HepG2 (cell line): ENCODE measurements at regions of chr11 and their contacts with region 1.

Region 1: DNA sequence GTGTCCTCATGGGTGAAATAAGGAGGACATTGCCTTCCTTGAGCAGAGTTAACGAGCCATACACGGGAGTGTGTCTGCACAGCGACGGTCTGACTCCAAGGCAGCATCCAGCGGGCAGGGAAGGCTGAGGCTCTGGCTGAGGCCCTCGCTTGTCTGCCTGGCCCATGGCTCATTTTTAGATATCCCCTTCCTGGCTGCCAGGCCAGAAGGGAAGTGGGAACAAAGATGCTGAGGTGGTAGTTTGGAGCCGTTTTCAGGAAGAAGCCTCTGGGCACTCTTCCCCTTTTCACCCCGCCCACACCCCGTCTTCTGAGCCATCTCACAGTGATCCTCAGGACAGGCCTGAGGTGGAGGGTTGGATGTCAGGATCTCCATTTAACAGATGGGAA is 3.0 kb upstream of the SLCO2B1 start:
- DNase-seq: no peak
- ATAC-seq: no peak
- H3K4me3 ChIP-seq: no peak overlapping the region
- H3K27ac ChIP-seq: no peak overlapping the region
- H3K4me1 ChIP-seq: peaks cover 99% of the 10 kb centered on the region
- H3K27me3 ChIP-seq: no peaks in the 10 kb centered on the region
- CTCF ChIP-seq: no peak
- EP300 ChIP-seq: no peak
- POLR2A ChIP-seq: no peak
- RAD21 ChIP-seq: no peak

Region 2: GRCh38 chr11:75170521-75171216 is 22.8 kb after region 1 on chr11:
- CTCF ChIA-PET with region 1: interaction called, 3 read pairs
- POLR2A ChIA-PET with region 1: interaction called, 174 read pairs
- in situ Hi-C with region 1: no loop called
- intact Hi-C with region 1: no loop called
- DNase-seq: no peak
- ATAC-seq: no peak
- H3K4me3 ChIP-seq: no peak overlapping the region
- H3K27ac ChIP-seq: peak overlapping the region; percentile 95
- H3K4me1 ChIP-seq: peaks cover 81% of the 10 kb centered on the region
- H3K27me3 ChIP-seq: no peaks in the 10 kb centered on the region
- CTCF ChIP-seq: no peak
- EP300 ChIP-seq: no peak
- POLR2A ChIP-seq: no peak
- RAD21 ChIP-seq: no peak